HEK293 (cell line): ENCODE measurements at regions of chr3 and their contacts with region 1.

Region 1: DNA sequence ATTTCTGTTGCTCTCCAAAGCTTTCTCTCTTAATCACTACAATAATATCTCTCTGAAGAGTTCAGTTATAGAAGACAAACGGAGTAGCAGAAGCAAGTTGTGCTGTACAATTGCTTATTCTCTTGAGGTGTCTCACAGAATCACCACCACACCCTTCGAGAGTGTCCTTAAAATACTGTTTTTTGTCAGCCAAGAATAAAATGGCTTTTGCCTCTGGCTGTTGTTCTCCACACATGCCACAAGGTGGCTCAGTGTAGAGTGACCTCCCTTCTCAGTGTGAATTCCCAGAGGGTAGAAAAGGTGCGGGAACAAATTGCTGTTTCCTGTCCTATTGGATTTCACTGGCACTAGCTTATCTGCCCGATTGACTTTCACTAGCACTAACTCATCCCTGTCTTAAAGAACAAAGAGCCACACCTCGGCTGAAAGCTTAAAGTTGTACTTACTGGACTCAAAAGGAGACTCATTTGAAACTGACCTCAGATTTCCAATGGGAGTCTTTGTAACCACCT is 134.2 kb upstream of the SATB1 start:
- H3K4me3 ChIP-seq: no peak overlapping the region
- H3K27ac ChIP-seq: no peak overlapping the region
- H3K4me1 ChIP-seq: no peaks in the 10 kb centered on the region
- CTCF ChIP-seq: peak; percentile 33; the same call in 1 of the 2 replicates

Region 2: GRCh38 chr3:18546632-18547031 is 12.8 kb before region 1 on chr3:
- CTCF ChIA-PET with region 1: interaction called, 10 read pairs
- POLR2A ChIA-PET with region 1: no interaction called
- H3K4me3 ChIP-seq: no peak overlapping the region
- H3K27ac ChIP-seq: no peak overlapping the region
- H3K4me1 ChIP-seq: no peaks in the 10 kb centered on the region
- CTCF ChIP-seq: no peak

Region 3: DNA sequence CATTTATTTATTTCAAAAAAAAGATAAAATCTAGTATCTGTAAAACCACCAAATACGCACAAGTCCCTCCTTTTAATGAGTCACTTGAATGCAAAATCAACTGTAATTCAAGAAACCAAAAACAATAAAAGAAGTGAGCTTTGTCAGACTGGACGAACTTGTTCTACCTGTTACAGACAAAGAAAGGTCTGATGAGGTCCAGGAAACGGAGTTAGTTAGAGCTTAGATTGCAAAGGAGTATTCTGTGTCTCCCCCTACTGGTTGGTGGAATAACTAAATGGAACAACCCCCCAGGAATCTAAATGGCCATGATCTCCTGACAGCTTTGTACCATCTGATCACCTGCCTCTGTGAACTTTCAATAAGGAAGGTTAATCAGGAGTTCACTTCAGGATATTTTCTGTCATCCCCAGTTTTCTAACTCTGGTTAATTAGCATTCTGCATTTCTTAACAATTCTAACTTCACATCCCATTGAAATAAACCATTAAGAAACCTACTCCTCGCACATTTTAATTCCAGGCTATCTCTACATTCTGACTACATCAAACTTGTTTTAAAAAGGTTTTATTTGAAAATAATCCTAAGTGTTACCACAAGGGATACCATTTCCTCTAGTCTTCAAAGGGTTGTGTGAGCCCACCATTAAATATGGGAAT is 198.8 kb after region 1 on chr3:
- CTCF ChIA-PET with region 1: interaction called, 28 read pairs
- POLR2A ChIA-PET with region 1: no interaction called
- H3K4me3 ChIP-seq: no peak overlapping the region
- H3K27ac ChIP-seq: no peak overlapping the region
- H3K4me1 ChIP-seq: no peaks in the 10 kb centered on the region
- CTCF ChIP-seq: no peak

Region 4: GRCh38 chr3:18988614-18989229 is 429.3 kb after region 1 on chr3:
- CTCF ChIA-PET with region 1: interaction called, 14 read pairs
- POLR2A ChIA-PET with region 1: no interaction called
- H3K4me3 ChIP-seq: no peak overlapping the region
- H3K27ac ChIP-seq: no peak overlapping the region
- H3K4me1 ChIP-seq: no peaks in the 10 kb centered on the region
- CTCF ChIP-seq: 0 out of 2 replicates have a peak, but pooled peaks have one; percentile 22